CD4-positive, alpha-beta memory T cell (primary cell): ENCODE measurements at regions of chr5 and their contacts with region 1.

Region 1: GRCh38 chr5:140107312-140108083 is 6.4 kb upstream of the PURA start:
- DNase-seq: peak; percentile 95 to 96 (median 95)
- H3K4me3 ChIP-seq: peak overlapping the region; percentile 77 to 88
- H3K4me3 Mint-ChIP-seq: peak overlapping the region; percentile 92 to 100 (median 97)
- H3K27ac ChIP-seq: peak overlapping the region; percentile 94
- H3K27ac Mint-ChIP-seq: peak overlapping the region; percentile 97 to 100 (median 99)
- H3K4me1 ChIP-seq: peaks cover 47% of the 10 kb centered on the region
- H3K4me1 Mint-ChIP-seq: peaks cover 19 to 51% (median 39%) of the 10 kb centered on the region in 4 donors
- H3K27me3 ChIP-seq: no peaks in the 10 kb centered on the region
- H3K27me3 Mint-ChIP-seq: no peaks in the 10 kb centered on the region

Region 2: DNA sequence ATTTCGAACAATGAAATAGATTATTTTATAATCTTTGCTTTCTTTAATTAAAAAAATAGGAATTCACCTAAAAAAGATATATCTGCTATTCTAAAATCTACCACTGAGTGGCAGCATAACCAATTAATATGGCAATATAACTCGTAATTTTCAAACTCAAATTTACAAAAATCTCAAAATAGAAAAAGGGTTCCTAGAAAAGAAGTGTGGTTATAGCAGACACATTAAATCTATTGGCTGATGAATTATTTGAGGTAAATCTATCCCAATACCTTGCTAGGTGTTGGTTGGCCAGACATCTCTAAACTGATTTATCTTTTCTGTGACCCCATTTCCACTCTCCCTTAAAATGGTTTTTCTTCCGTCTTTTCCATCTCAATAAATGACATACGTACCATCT is 34.2 kb before region 1 on chr5:
- CTCF ChIA-PET with region 1: interaction called, 7 read pairs
- POLR2A ChIA-PET with region 1: interaction called, 3 read pairs
- intact Hi-C with region 1: loop called (anchors 5 kb)
- DNase-seq: peak in 4 of 5 donors; percentile 41 to 53 (median 50)
- H3K4me3 ChIP-seq: no peak overlapping the region
- H3K4me3 Mint-ChIP-seq: no peak overlapping the region
- H3K27ac ChIP-seq: no peak overlapping the region
- H3K27ac Mint-ChIP-seq: no peak overlapping the region
- H3K4me1 ChIP-seq: no peaks in the 10 kb centered on the region
- H3K4me1 Mint-ChIP-seq: no peaks in the 10 kb centered on the region
- H3K27me3 ChIP-seq: peaks cover 7% of the 10 kb centered on the region
- H3K27me3 Mint-ChIP-seq: peaks cover 8 to 13% of the 10 kb centered on the region in 2 donors

Region 3: DNA sequence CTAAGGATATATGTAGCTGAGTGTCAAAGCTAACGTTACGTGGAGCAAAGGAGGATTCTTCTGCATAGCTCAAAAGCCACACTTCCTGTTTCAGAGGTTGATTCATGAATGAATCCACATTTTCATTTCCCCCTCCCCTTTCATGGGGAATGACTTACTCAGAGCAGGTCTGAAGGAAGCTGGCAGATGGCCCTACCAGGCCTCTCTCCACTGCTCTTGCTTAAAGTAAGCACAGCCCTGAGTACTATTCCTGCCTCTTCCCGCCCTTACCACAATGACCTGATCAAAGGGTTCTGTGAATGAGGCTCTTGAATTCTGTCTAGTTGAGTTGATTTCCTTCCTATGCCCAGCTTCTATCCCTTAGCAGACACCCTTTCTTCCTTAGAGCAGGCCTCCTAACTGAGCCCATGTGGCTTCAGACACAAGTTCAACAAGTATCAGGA is 24.5 kb after region 1 on chr5:
- CTCF ChIA-PET with region 1: no interaction called
- POLR2A ChIA-PET with region 1: interaction called, 10 read pairs
- intact Hi-C with region 1: no loop called
- DNase-seq: peak in 1 of 5 donors; percentile 11
- H3K4me3 ChIP-seq: no peak overlapping the region
- H3K4me3 Mint-ChIP-seq: peak overlapping the region in 5 of 8 donors; percentile 5 to 54 (median 25)
- H3K27ac ChIP-seq: no peak overlapping the region
- H3K27ac Mint-ChIP-seq: peak overlapping the region in 4 of 7 donors; percentile 32 to 37 (median 36)
- H3K4me1 ChIP-seq: peaks cover 16% of the 10 kb centered on the region
- H3K4me1 Mint-ChIP-seq: peaks cover 25 to 49% (median 35%) of the 10 kb centered on the region in 4 donors
- H3K27me3 ChIP-seq: no peaks in the 10 kb centered on the region
- H3K27me3 Mint-ChIP-seq: no peaks in the 10 kb centered on the region

Region 4: DNA sequence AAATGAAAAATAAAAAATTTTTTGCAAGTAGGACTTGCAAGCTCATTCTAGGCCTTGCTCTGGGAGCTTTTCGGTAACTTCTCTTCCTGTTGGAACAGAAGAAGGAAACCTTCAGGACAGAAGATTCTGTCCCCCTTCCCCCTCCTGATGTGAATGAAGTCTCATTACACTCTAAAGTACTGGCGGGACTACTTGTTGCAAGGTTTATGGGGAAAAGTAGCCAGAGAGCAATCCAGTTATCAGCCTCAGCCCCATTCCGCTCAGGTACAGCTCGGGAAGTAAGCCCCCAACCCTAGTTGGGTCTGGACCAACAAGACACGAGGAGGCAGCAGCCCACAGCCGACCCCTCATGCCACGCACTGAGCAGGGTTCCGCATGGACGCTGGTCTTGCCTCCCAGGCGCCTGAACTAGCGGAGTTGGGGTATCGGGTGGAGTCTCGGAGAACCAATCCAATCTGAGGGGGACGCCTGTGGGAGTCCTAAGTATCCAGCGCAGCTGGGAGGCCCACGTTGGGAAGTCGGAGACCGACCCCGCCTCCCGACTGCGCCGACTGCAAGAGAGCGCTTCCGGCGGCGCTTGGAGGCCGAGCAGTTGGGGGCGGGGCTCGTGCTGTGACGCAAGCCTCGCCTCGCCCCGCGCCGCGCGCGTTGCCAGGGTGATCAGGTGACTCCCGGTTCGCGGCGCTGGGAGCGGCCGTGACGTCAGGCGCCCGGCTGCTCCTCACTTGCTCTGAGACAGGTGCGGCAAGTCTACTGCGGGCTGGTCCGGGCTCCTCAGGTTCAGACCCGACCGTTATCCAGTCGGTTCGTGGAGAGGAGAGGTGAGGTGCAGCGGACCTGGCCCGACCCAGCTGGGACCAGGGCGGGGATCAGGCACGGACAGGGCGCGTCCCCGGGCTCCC is 67.2 kb after region 1 on chr5 and contains the start of gene CYSTM1:
- CTCF ChIA-PET with region 1: no interaction called
- POLR2A ChIA-PET with region 1: interaction called, 20 read pairs
- intact Hi-C with region 1: loop called (anchors 1 kb)
- DNase-seq: peak; percentile 94 to 98 (median 97)
- H3K4me3 ChIP-seq: peak within 1 kb of the TSS; percentile 74 to 77
- H3K4me3 Mint-ChIP-seq: peak within 1 kb of the TSS; percentile 91 to 97 (median 93)
- H3K27ac ChIP-seq: peak within 1 kb of the TSS; percentile 89
- H3K27ac Mint-ChIP-seq: peak within 1 kb of the TSS; percentile 92 to 99 (median 98)
- H3K4me1 ChIP-seq: peaks cover 12% of the 10 kb centered on the region
- H3K4me1 Mint-ChIP-seq: peaks cover 7 to 23% (median 11%) of the 10 kb centered on the region in 4 donors
- H3K27me3 ChIP-seq: no peaks in the 10 kb centered on the region
- H3K27me3 Mint-ChIP-seq: no peaks in the 10 kb centered on the region
- total RNA-seq, gene CYSTM1: 5.0 to 6.3 TPM

Region 5: GRCh38 chr5:140700177-140701144 is 593.0 kb after region 1 on chr5 and contains the start of gene ZMAT2:
- CTCF ChIA-PET with region 1: no interaction called
- POLR2A ChIA-PET with region 1: no interaction called
- intact Hi-C with region 1: loop called (anchors 10 kb)
- DNase-seq: peak; percentile 89 to 98 (median 94)
- H3K4me3 ChIP-seq: peak within 1 kb of the TSS; percentile 48 to 91
- H3K4me3 Mint-ChIP-seq: peak within 1 kb of the TSS; percentile 95 to 99 (median 98)
- H3K27ac ChIP-seq: peak within 1 kb of the TSS; percentile 80
- H3K27ac Mint-ChIP-seq: peak within 1 kb of the TSS; percentile 91 to 99 (median 98)
- H3K4me1 ChIP-seq: peaks cover 18% of the 10 kb centered on the region
- H3K4me1 Mint-ChIP-seq: peaks cover 17 to 31% (median 23%) of the 10 kb centered on the region in 4 donors
- H3K27me3 ChIP-seq: no peaks in the 10 kb centered on the region
- H3K27me3 Mint-ChIP-seq: no peaks in the 10 kb centered on the region
- total RNA-seq, gene ZMAT2: 56.3 to 57.4 TPM